MCF 10A (cell line): ENCODE measurements at regions of chr6 and their contacts with region 1.

Region 1: DNA sequence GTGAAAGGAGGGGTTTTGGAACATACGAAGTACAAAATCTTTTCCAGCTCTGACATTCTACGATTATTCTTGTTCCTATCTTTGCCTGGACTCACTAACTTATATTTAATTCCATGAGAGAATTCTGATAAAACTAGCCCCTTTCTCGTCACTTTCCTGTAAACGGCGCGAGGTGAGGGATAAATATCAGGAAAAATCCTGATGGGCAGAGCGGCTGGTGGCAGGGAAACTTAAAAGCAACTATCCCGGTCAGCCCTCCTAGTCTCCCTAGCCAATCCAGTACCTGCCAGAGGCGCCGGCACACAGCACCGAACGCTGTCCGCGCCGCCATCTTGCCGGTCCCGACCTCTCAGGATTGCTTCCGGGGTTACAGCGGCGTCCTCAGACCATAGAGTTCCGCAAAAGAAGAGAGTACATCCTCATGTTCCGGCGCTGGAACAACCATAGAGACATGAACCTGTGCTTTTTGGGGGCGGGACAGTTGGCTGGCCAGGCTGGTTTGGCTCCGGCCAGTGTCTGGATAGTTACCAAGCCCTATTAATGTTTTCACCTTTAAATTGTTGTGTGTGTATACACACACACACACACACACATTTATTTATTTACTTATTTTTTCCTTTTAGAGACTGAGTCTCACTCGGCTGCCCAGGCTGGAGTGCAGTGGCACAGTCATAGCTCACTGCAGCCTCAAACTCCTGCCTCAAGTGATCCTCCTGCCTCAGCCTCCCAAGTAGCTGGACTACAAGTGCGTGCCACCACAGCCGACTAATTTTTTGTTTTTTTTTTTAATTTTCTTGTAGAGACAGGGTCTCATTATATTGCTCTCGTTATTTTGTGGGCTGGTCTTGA is at the start of gene MRPS10:
- DNase-seq: peak; percentile 95
- H3K4me3 Mint-ChIP-seq: peak within 1 kb of the TSS; percentile 98
- H3K27ac Mint-ChIP-seq: peak within 1 kb of the TSS; percentile 98
- H3K4me1 Mint-ChIP-seq: peaks cover 10% of the 10 kb centered on the region
- H3K27me3 Mint-ChIP-seq: no peaks in the 10 kb centered on the region
- CTCF ChIP-seq: no peak
- total RNA-seq, gene MRPS10: 62.9 and 67.3 TPM in 2 replicates

Region 2: DNA sequence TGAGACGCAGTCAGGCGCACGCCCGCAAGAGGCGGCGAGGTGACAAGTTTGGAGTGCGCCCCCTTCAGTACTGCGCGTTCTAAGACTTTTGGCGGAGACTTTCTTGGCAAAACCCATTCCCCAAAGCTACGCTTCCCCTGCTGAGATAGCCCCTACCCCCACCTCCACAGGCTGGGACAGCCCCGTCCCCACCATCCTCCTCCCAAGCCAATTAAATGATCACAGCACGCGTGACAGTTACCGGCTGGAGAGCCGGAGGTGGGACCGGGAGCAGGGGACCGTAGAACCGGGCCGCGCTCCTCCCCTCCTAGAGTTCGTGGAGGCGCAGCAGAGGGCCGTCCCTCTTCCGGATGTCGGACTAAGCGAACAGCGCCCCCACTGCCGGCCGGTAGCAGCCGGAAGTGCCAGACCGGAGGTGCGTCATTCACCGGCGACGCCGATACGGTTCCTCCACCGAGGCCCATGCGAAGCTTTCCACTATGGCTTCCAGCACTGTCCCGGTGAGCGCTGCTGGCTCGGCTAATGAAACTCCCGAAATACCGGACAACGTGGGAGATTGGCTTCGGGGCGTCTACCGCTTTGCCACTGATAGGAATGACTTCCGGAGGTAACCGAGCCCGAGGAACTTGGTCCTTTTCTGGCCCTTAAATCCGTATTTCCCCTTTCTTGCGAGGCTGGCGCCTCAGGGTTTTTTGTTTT is 430.4 kb before region 1 on chr6 and contains the start of gene TOMM6:
- CTCF ChIA-PET with region 1: interaction called, 3 read pairs
- POLR2A ChIA-PET with region 1: no interaction called
- intact Hi-C with region 1: loop called (anchors 10 kb)
- DNase-seq: peak; percentile 93
- H3K4me3 Mint-ChIP-seq: peak within 1 kb of the TSS; percentile 88
- H3K27ac Mint-ChIP-seq: peak within 1 kb of the TSS; percentile 96
- H3K4me1 Mint-ChIP-seq: peaks cover 13% of the 10 kb centered on the region
- H3K27me3 Mint-ChIP-seq: no peaks in the 10 kb centered on the region
- CTCF ChIP-seq: peak; percentile 89
- total RNA-seq, gene TOMM6: 202 and 227 TPM in 2 replicates

Region 3: GRCh38 chr6:42086046-42087035 is 131.4 kb before region 1 on chr6:
- CTCF ChIA-PET with region 1: interaction called, 13 read pairs
- POLR2A ChIA-PET with region 1: no interaction called
- intact Hi-C with region 1: no loop called
- DNase-seq: no peak
- H3K4me3 Mint-ChIP-seq: no peak overlapping the region
- H3K27ac Mint-ChIP-seq: no peak overlapping the region
- H3K4me1 Mint-ChIP-seq: peaks cover 14% of the 10 kb centered on the region
- H3K27me3 Mint-ChIP-seq: no peaks in the 10 kb centered on the region
- CTCF ChIP-seq: no peak

Region 4: GRCh38 chr6:42190554-42191183 is 27.1 kb before region 1 on chr6:
- CTCF ChIA-PET with region 1: interaction called, 19 read pairs
- POLR2A ChIA-PET with region 1: interaction called, 3 read pairs
- intact Hi-C with region 1: no loop called
- DNase-seq: no peak
- H3K4me3 Mint-ChIP-seq: no peak overlapping the region
- H3K27ac Mint-ChIP-seq: no peak overlapping the region
- H3K4me1 Mint-ChIP-seq: no peaks in the 10 kb centered on the region
- H3K27me3 Mint-ChIP-seq: no peaks in the 10 kb centered on the region
- CTCF ChIP-seq: no peak

Region 5: DNA sequence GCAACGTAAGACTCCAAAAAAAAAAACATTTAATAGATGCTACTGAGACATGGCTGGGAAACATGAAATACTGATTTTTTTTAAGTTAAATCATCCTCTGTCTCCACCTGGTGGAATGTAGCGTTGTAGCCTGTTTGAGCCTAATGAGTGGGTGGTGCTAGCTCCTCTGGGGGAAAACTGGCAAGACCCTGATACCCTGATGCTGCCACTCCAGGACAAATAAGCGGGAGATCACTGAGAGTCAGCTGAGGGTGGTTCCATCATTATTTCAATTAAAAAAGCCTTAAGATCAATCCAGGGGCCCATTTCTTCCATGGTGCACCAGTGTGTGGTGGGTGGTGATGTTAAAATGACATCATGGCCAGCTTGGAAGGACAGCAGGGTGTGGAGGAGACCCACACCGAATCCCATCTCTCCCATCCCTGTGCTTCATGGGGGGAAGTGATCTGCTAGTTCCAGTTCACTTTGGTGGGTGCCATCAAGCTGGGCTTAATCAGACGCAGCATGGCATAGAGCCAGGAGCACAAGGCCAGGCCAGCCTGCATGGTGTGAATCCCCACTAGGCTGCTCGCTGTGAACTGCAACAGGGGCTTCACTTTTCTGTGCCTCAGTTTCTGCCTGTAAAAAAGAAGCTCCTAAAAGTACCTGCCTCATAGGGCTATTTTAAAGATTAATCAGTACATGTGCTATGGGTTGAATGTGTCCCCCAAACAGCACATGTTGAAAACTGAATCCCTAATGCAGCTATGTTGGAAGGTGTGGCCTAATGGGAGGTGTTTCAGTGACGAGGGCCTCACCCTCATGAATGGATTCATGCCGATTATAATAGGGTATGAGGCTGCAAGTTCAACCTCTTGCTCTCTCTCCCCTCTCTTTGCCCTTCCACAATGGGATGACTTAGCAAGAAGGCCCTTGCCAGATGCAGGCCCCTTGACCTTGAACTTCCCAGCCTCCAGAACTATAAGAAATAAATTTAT is 12.9 kb after region 1 on chr6:
- CTCF ChIA-PET with region 1: interaction called, 14 read pairs
- POLR2A ChIA-PET with region 1: interaction called, 39 read pairs
- intact Hi-C with region 1: no loop called
- DNase-seq: peak; percentile 36
- H3K4me3 Mint-ChIP-seq: no peak overlapping the region
- H3K27ac Mint-ChIP-seq: peak overlapping the region; percentile 13
- H3K4me1 Mint-ChIP-seq: peaks cover 39% of the 10 kb centered on the region
- H3K27me3 Mint-ChIP-seq: no peaks in the 10 kb centered on the region
- CTCF ChIP-seq: peak; percentile 43

Region 6: GRCh38 chr6:42322676-42323075 is 104.9 kb after region 1 on chr6:
- CTCF ChIA-PET with region 1: no interaction called
- POLR2A ChIA-PET with region 1: no interaction called
- intact Hi-C with region 1: no loop called
- DNase-seq: no peak
- H3K4me3 Mint-ChIP-seq: no peak overlapping the region
- H3K27ac Mint-ChIP-seq: no peak overlapping the region
- H3K4me1 Mint-ChIP-seq: peaks cover 29% of the 10 kb centered on the region
- H3K27me3 Mint-ChIP-seq: no peaks in the 10 kb centered on the region
- CTCF ChIP-seq: no peak

Region 7: GRCh38 chr6:42453031-42453653 is 235.4 kb after region 1 on chr6:
- CTCF ChIA-PET with region 1: interaction called, 3 read pairs
- POLR2A ChIA-PET with region 1: interaction called, 13 read pairs
- intact Hi-C with region 1: no loop called
- DNase-seq: peak; percentile 87
- H3K4me3 Mint-ChIP-seq: peak overlapping the region; percentile 91
- H3K27ac Mint-ChIP-seq: no peak overlapping the region
- H3K4me1 Mint-ChIP-seq: peaks cover 32% of the 10 kb centered on the region
- H3K27me3 Mint-ChIP-seq: no peaks in the 10 kb centered on the region
- CTCF ChIP-seq: no peak